ENCODE measurements at regions of chr6 and their contacts with region 1.

Region 1: DNA sequence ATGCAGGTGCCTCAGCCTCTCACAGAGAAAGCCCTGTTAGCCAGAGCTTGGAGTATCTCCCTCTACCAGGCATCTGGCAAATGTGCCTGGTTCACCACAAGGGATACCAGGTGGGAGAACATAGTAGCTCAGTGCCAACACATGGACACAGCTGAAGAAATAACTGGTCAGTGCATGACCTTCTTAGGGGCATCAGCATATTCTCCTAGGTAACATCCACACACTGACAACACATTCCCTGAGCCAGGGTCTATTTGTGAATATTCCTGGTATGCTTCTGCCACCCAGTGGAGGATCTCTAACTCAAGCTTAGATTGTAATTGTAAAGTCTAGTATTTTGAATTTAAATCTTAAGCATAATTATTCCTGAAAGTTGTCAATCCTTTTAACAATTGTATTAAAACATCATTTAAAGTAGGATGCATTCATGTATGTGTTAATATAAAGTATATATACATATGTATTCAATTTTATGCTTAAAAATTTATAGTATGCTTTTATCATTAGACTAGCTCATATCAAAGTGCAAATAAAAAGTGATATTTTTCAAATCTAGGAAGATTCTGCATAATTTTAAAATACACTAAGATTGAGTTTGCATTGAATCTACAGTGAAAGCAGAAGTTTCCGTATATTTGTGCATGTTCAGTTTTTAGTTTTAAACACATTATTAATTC is 45.3 kb upstream of the COL21A1 start:
- DNase-seq: no peak
- H3K4me3 ChIP-seq: no peak overlapping the region
- H3K27ac ChIP-seq: no peak overlapping the region
- H3K4me1 ChIP-seq: peaks cover 8% of the 10 kb centered on the region
- H3K27me3 ChIP-seq: no peaks in the 10 kb centered on the region
- CTCF ChIP-seq: peak; percentile 32 to 81 (median 80)
- POLR2A ChIP-seq: no peak

Region 2: GRCh38 chr6:55980627-55981211 is 311.9 kb before region 1 on chr6:
- intact Hi-C with region 1: loop called (anchors 2 kb)
- DNase-seq: no peak
- H3K4me3 ChIP-seq: no peak overlapping the region
- H3K27ac ChIP-seq: no peak overlapping the region
- H3K4me1 ChIP-seq: no peaks in the 10 kb centered on the region
- H3K27me3 ChIP-seq: no peaks in the 10 kb centered on the region
- CTCF ChIP-seq: peak; percentile 61 to 72 (median 66)
- POLR2A ChIP-seq: no peak